Breast epithelium (tissue), 4 donors: ENCODE measurements at regions of chr5 and their contacts with region 1.

Region 1: DNA sequence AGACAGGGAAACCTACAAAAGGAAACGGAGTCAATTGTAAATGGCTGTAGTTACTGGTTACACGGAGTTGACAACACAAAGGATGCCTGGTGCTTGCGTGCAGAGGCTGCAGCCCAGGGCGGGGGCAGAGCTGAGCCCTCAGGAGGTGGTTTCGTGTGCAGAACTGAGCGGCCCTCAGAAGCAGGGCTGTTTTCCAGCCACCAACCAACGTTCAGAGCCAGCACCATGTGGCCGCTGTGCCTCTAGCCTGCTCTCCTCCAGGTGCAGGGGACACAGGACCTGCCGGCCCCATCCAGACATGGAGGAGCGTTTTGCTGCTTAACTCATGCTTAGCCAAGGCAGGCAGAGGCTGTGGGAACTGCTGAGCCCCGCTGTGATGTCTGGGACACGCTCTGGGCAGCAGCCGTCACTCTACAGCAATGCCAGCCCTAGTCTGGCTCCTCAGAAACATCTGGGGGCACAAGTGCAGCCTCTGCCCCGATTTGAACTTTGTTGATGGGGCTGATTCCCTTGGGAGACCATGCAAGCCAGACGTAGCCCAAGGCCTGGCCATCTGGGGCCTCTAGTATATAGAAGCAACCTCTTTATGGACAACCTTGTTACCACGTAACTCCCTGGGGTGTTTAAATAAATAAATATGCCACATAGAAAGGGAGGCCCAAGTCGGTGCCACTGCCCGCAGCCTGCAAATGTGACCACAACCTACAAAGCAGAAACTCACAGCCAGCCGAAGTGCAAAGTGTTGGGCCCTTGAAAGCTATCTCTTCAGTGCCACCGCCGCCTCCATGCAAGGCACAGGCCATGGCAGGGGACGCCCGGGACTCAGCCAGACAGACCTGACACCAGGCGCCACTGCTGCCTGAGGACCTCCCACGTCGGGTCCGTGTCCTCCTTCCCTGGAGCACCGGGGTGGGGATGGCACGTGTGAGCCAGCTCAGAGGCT is 42.1 kb downstream of the NKD2 start:
- DNase-seq: no peak
- H3K4me3 ChIP-seq: no peak overlapping the region
- H3K27ac ChIP-seq: no peak overlapping the region
- H3K4me1 ChIP-seq: no peaks in the 10 kb centered on the region
- H3K27me3 ChIP-seq: no peaks in the 10 kb centered on the region
- CTCF ChIP-seq: no peak
- POLR2A ChIP-seq: no peak

Region 2: GRCh38 chr5:1094670-1095190 is 44.0 kb after region 1 on chr5:
- intact Hi-C with region 1: loop called (anchors 1 kb)
- DNase-seq: no peak
- H3K4me3 ChIP-seq: no peak overlapping the region
- H3K27ac ChIP-seq: no peak overlapping the region
- H3K4me1 ChIP-seq: no peaks in the 10 kb centered on the region
- H3K27me3 ChIP-seq: no peaks in the 10 kb centered on the region
- CTCF ChIP-seq: no peak
- POLR2A ChIP-seq: no peak